ENCODE measurements at regions of chr14 and their contacts with region 1.

Region 1: DNA sequence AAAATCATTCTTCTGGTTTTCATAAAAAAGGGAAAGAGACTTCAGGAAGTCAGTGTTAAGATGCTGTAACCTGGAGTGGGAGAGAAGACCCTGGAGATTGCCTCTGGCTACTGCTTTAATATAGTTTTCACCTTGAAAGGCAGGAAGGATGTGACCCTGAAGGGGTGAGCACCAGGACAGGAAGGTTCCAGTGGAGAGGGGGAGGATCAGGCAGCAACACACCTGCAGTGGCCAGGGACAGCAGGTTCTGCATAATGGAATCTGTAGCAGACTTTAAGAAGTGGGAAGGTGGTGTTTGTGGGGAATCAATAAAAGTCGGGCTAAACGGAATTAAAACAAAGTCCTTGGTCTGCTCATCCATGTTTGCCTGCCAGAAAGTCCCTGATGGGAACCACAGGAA is 6.3 kb upstream of the HEATR5A start:
- DNase-seq: no peak
- H3K4me3 ChIP-seq: no peak overlapping the region
- H3K27ac ChIP-seq: no peak overlapping the region
- H3K27me3 ChIP-seq: no peaks in the 10 kb centered on the region
- CTCF ChIP-seq: no peak

Region 2: GRCh38 chr14:31340297-31341063 is 86.2 kb before region 1 on chr14:
- CTCF ChIA-PET with region 1: no interaction called
- POLR2A ChIA-PET with region 1: no interaction called
- DNase-seq: no peak
- H3K4me3 ChIP-seq: no peak overlapping the region
- H3K27ac ChIP-seq: no peak overlapping the region
- H3K27me3 ChIP-seq: no peaks in the 10 kb centered on the region
- CTCF ChIP-seq: no peak

Region 3: GRCh38 chr14:31357279-31357678 is 69.4 kb before region 1 on chr14:
- CTCF ChIA-PET with region 1: no interaction called
- POLR2A ChIA-PET with region 1: no interaction called
- DNase-seq: no peak
- H3K4me3 ChIP-seq: no peak overlapping the region
- H3K27ac ChIP-seq: no peak overlapping the region
- H3K27me3 ChIP-seq: no peaks in the 10 kb centered on the region
- CTCF ChIP-seq: no peak

Region 4: DNA sequence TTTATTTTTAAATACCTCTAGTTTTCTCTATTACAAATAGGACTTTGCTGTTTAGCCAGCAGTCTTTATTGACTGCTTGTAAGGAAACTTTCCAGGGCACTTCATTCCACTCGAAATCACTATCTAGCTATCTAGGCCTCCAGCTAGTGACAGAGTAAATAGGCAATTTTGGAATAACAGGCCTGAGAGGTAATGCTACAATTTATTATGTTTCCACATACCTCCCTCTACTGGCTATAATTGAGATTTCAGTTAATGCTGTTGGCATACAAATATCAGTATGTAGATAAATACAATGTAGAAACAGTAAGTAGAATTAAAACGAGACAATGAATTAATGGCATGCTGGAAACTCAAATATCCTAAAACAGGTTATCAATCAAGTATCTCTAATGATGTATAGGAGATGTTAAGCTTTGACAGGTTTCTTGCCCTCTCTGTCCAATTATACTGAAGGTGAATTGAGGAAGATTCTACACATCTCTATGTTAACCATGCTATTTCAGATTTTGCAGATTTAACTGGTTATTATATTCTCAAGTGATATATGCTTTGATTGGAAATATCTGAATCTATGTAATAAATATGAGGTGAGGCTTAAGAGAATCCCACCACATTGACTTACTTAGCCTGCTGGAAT is 23.4 kb after region 1 on chr14:
- CTCF ChIA-PET with region 1: interaction called, 12 read pairs
- POLR2A ChIA-PET with region 1: no interaction called
- DNase-seq: no peak
- H3K4me3 ChIP-seq: no peak overlapping the region
- H3K27ac ChIP-seq: no peak overlapping the region
- H3K27me3 ChIP-seq: no peaks in the 10 kb centered on the region
- CTCF ChIP-seq: peak; percentile 69

Measured in AG04450 (cell line).